Spleen (tissue), 13 donors: ENCODE measurements at regions of chr2 and their contacts with region 1.

Region 1: DNA sequence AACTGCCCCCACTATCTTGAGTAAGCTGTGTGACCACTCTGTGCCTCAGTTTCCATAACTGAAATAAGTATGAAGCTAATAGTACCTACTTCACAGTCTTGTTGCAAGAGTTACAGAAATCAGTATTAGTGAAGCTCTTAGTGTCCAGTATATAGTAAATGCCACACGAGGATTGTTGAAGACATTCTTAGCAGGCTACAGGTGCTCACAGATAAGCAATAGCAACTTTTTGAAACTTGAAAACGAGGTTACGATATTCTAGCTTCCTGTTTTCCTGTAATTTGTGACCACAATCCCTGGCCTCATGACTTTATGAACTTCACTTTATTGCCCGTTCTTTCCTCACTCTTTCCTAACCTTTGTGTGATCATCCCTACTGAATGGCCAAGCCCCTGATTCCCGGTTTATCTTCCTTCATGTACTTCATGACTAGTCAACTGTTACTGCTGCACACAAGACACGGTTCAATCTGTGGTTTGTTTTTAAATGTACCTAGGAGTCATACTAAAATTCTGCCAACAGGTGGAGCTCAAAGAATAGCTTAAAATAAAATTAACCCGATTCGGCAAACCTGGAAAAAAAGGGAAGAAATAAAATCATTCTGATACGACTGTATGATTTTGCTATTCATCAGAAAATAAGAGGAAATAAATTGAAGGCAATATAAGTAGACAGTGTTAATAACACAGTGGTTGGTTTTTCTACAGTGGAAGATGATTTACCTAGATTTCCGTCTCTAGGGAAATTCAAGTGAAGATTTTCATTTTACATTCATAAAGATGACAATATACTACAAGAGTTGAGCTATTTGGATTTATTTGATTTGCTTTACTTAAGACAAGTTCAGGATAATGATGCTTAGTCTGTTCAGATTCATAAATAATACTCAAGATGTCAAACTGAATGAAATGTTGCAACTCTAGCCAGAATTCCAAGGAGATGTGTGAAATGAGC is 38.1 kb upstream of the STAT1 start:
- DNase-seq: no peak
- H3K4me3 ChIP-seq: no peak overlapping the region
- H3K27ac ChIP-seq: peak overlapping the region in 3 of 8 donors; percentile 51 to 59 (median 52)
- H3K4me1 ChIP-seq: peaks cover 0 to 57% (median 26%) of the 10 kb centered on the region in 6 donors
- H3K27me3 ChIP-seq: no peaks in the 10 kb centered on the region
- CTCF ChIP-seq: peak in 10 of 11 experiments; percentile 38 to 81 (median 66)
- POLR2A ChIP-seq: no peak

Region 2: DNA sequence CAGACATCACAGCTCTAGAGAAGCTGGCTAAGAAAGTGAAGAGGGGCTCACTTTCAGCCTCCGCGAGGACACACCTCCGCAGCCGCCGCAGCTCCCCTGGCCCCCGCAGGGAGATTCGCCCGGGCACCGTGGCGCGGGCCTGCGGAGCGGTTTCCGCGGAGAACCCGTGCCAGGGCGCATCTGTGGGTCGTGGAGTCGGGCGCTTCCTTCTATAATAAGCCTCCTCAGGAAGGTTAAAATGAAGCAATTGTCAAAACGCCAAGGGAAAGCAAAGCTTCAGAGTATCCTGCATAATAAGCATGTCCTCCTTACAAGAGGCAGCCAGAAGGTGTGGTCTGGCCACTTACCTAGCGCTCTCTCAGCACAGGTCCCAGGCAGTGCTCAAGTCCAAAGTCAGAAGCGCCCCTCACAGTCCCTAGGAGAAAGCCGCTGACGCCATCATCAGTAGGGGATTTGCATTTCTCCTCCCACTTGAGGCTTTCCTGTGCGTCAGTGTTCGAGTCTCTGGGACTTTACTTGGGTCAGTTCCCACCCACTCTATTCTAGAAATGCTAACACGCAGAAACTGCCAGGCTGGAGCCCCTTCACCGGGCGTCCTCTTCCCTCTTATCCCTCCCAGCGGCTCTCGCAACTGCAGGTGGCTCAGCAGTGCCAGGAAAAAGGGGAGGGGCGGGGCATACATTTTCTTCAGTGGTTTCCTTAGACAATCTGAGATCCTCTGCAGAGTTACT is 98.7 kb after region 1 on chr2 and contains the start of gene STAT4:
- intact Hi-C with region 1: loop called (anchors 5 kb)
- DNase-seq: peak; percentile 89
- H3K4me3 ChIP-seq: peak within 1 kb of the TSS; percentile 51 to 79 (median 54)
- H3K27ac ChIP-seq: peak within 1 kb of the TSS; percentile 72 to 93 (median 86)
- H3K4me1 ChIP-seq: peaks cover 6 to 85% (median 28%) of the 10 kb centered on the region in 6 donors
- H3K27me3 ChIP-seq: no peaks in the 10 kb centered on the region
- CTCF ChIP-seq: no peak
- POLR2A ChIP-seq: peak in 2 of 3 donors; percentile 73 to 77
- total RNA-seq, gene STAT4: 22.0 to 36.7 (median 27.2) TPM

Region 3: DNA sequence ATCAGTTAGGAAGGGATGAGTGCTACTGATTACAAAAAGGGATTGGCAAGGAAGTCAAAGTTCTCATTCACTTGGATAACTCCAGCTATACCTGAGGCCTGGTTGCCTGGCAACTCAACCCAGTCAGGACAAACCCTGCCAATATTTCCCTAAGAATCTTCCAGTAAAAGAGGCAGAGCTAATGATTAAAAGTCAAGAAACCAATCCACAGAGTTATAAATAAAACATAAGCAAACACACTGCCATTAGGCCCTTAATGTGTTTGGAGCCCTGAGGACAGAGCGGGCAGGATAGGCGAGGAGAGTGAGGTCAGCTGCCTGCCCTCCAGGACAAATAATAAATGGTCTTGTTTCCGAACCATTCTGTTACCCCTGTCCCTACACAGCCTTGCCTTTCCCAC is 410.3 kb after region 1 on chr2:
- intact Hi-C with region 1: no loop called
- DNase-seq: no peak
- H3K4me3 ChIP-seq: no peak overlapping the region
- H3K27ac ChIP-seq: no peak overlapping the region
- H3K4me1 ChIP-seq: no peaks in the 10 kb centered on the region
- H3K27me3 ChIP-seq: no peaks in the 10 kb centered on the region
- CTCF ChIP-seq: no peak
- POLR2A ChIP-seq: no peak

Region 4: GRCh38 chr2:191515551-191515950 is 463.4 kb after region 1 on chr2:
- intact Hi-C with region 1: loop called (anchors 10 kb)
- DNase-seq: no peak
- H3K4me3 ChIP-seq: no peak overlapping the region
- H3K27ac ChIP-seq: no peak overlapping the region
- H3K4me1 ChIP-seq: no peaks in the 10 kb centered on the region
- H3K27me3 ChIP-seq: peaks cover 0 to 8% (median 0%) of the 10 kb centered on the region in 7 donors
- CTCF ChIP-seq: no peak
- POLR2A ChIP-seq: no peak